BJ (cell line): ENCODE measurements at regions of chr6 and their contacts with region 1.

Region 1: DNA sequence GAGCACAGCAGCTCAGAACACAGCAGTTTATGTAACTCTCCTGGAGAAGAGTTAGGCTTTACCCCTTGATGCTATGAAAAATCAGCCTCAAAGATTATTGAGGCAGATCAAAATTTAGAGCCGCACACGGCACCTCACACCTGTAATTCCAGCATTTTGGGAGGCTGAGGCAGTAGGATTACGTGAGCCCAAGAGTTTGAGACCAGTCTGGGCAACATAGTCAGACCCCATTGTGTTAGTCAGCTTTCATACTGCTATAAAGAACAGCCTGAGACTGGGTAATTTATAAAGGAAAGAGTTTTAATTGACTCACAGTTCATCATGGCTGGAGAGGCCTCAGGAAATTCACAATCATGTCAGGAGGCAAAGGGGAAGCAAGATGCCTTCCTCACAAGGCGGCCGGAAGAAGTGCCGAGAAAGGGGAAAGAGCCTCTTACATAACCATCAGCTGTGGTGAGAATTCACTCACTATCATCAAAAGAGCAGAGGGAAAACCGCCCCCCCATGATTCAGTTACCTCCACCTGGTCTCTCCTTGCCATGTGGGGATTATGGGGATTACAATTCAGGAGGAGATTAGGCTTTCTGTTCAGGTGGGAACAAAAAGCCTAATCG is 87.7 kb downstream of the SGK1 start:
- DNase-seq: no peak
- H3K4me3 ChIP-seq: no peak overlapping the region
- H3K27me3 ChIP-seq: no peaks in the 10 kb centered on the region
- CTCF ChIP-seq: no peak

Region 2: DNA sequence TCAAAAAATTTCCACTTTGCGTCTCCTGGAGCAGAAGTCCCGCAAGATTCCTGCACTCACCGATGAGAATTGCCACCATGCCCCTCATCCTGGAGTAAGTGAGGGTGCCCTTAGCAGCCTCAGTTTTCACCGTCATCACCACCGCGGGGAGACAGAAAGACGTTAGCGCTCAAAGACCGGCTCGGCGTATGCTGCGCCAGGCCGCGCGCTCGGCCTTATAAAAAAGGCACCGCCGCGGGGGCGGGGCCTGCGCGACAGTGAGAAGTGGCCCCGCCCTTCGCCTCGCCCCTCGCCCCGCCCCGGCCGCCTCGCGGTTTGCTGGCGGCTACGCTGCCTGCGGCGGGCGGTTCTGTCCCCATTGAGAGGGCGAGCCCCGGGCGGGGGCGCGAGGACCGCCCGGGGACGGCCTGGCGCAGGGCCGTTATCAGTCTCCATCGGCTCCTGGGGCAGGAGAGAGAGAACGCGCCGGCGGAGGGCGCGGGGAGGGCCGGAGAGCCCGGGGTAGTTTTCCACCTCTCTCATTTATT is 55.5 kb before region 1 on chr6:
- CTCF ChIA-PET with region 1: no interaction called
- POLR2A ChIA-PET with region 1: interaction called, 19 read pairs
- DNase-seq: peak; percentile 38
- H3K4me3 ChIP-seq: peak overlapping the region; percentile 79
- H3K27me3 ChIP-seq: no peaks in the 10 kb centered on the region
- CTCF ChIP-seq: 0 out of 2 replicates have a peak, but pooled peaks have one; percentile 2